PC-3 (cell line): ENCODE measurements at regions of chr9 and their contacts with region 1.

Region 1: GRCh38 chr9:126301985-126302603 is 24.5 kb upstream of the MVB12B start:
- DNase-seq: peak; percentile 74
- ATAC-seq: peak; percentile 85
- H3K4me3 ChIP-seq: no peak overlapping the region
- H3K27ac ChIP-seq: no peak overlapping the region
- H3K4me1 ChIP-seq: no peaks in the 10 kb centered on the region
- H3K27me3 ChIP-seq: no peaks in the 10 kb centered on the region
- CTCF ChIP-seq: peak; percentile 80

Region 2: GRCh38 chr9:126386088-126386487 is 84.0 kb after region 1 on chr9:
- CTCF ChIA-PET with region 1: no interaction called
- POLR2A ChIA-PET with region 1: no interaction called
- intact Hi-C with region 1: loop called (anchors 1 kb)
- DNase-seq: peak; percentile 43
- ATAC-seq: peak; percentile 75
- H3K4me3 ChIP-seq: no peak overlapping the region
- H3K27ac ChIP-seq: no peak overlapping the region
- H3K4me1 ChIP-seq: peaks cover 30% of the 10 kb centered on the region
- H3K27me3 ChIP-seq: no peaks in the 10 kb centered on the region
- CTCF ChIP-seq: peak; percentile 61

Region 3: DNA sequence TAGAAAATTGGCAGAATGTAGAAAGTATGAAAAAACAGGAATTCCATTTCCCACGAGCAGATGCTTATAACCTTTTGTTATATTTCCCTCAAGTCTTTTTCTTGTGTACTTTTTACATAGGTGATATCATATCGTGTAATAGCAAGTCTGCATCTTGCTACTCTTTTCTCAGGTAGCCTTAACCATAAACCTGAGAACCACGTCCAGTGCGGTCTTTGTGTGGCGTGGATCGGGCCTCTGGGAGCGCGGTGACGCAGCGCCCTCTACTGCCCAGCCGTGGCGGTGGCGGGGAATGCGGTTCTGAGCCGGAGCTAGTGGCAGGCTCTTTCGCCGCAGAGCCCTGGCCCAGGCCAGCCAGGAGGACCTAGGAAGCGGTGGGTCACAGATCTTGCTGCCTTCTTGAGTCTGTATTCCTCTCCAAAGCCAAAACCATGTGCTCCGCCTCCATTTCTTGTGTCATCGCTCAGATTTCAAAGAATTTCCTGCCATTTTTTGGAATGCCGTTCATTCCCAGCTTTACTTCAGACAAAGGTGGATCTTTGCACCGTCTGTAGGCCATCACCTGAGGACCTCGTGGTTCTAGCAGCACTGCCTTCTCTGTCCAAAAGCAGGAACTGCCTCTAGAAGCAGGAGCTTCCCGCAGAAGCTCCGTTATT is 96.4 kb after region 1 on chr9:
- CTCF ChIA-PET with region 1: interaction called, 8 read pairs
- POLR2A ChIA-PET with region 1: interaction called, 4 read pairs
- intact Hi-C with region 1: loop called (anchors 1 kb)
- DNase-seq: peak; percentile 66
- ATAC-seq: peak; percentile 87
- H3K4me3 ChIP-seq: no peak overlapping the region
- H3K27ac ChIP-seq: no peak overlapping the region
- H3K4me1 ChIP-seq: peaks cover 17% of the 10 kb centered on the region
- H3K27me3 ChIP-seq: no peaks in the 10 kb centered on the region
- CTCF ChIP-seq: peak; percentile 89

Region 4: GRCh38 chr9:126471084-126471624 is 169.1 kb after region 1 on chr9:
- CTCF ChIA-PET with region 1: no interaction called
- POLR2A ChIA-PET with region 1: no interaction called
- intact Hi-C with region 1: no loop called
- DNase-seq: no peak
- ATAC-seq: no peak
- H3K4me3 ChIP-seq: no peak overlapping the region
- H3K27ac ChIP-seq: no peak overlapping the region
- H3K4me1 ChIP-seq: no peaks in the 10 kb centered on the region
- H3K27me3 ChIP-seq: no peaks in the 10 kb centered on the region
- CTCF ChIP-seq: no peak

Region 5: GRCh38 chr9:126482361-126483044 is 180.4 kb after region 1 on chr9:
- CTCF ChIA-PET with region 1: no interaction called
- POLR2A ChIA-PET with region 1: no interaction called
- intact Hi-C with region 1: no loop called
- DNase-seq: no peak
- ATAC-seq: no peak
- H3K4me3 ChIP-seq: no peak overlapping the region
- H3K27ac ChIP-seq: no peak overlapping the region
- H3K4me1 ChIP-seq: no peaks in the 10 kb centered on the region
- H3K27me3 ChIP-seq: no peaks in the 10 kb centered on the region
- CTCF ChIP-seq: no peak

Region 6: GRCh38 chr9:126558051-126558665 is 256.1 kb after region 1 on chr9:
- CTCF ChIA-PET with region 1: no interaction called
- POLR2A ChIA-PET with region 1: no interaction called
- intact Hi-C with region 1: no loop called
- DNase-seq: peak; percentile 70
- ATAC-seq: peak; percentile 75
- H3K4me3 ChIP-seq: no peak overlapping the region
- H3K27ac ChIP-seq: no peak overlapping the region
- H3K4me1 ChIP-seq: no peaks in the 10 kb centered on the region
- H3K27me3 ChIP-seq: peaks cover 15% of the 10 kb centered on the region
- CTCF ChIP-seq: peak; percentile 81